Vagina (tissue), 2 donors: ENCODE measurements at regions of chrX and their contacts with region 1.

Region 1: DNA sequence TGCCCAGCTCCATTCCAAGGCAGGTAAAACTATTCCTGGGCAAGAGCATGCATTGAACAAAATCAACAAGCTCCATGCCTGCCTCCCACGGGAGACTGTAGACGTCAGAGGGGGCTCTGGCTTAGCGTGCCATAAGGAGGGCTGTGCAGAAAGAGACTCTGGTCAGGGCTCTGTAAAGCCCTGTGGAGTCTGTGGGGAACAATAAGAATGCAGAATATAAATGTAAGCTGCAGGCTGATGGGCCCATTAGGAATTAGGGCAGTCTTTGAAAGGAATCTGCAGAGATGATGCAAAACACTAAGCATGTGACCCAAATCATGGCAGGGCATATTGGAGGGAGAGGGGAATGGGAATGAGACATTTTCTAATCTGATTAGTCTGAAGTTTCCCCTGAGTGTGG is 170.3 kb downstream of the EFHC2 start:
- DNase-seq: no peak
- H3K4me3 ChIP-seq: no peak overlapping the region
- H3K27ac ChIP-seq: no peak overlapping the region
- H3K4me1 ChIP-seq: no peaks in the 10 kb centered on the region
- H3K27me3 ChIP-seq: no peaks in the 10 kb centered on the region
- CTCF ChIP-seq: no peak
- POLR2A ChIP-seq: no peak

Region 2: DNA sequence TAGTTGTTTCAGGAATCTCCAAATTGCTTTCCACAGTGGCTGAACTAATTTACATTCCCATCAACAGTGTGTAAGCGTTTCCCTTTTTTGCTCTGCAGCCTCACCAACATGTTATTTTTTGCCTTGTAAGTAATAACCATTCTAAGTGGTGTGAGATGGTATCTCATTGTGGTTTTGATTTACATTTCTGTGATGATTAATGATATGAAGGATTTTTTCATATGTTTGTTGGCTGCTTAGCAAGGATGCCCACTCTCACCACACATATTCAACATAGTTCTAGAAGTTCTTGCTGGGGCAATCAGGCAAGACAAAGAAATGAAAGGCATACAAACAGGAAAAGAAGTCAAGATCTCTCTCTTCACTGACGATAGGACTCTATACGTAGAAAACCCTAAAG is 1899.6 kb after region 1 on chrX:
- intact Hi-C with region 1: loop called (anchors 10 kb)
- DNase-seq: no peak
- H3K4me3 ChIP-seq: no peak overlapping the region
- H3K27ac ChIP-seq: no peak overlapping the region
- H3K4me1 ChIP-seq: no peaks in the 10 kb centered on the region
- H3K27me3 ChIP-seq: no peaks in the 10 kb centered on the region
- CTCF ChIP-seq: no peak
- POLR2A ChIP-seq: no peak